Activated T-helper 1 cell treated with anti-CD3 and anti-CD28 coated beads, Interleukin-12 subunit alpha, Interleukin-12 subunit beta, Interleukin-2, Interleukin-4 antibody, amounts not matched to agents 30 ng/mL and 10 ng/mL and 1 ng/mL, durations not matched to agents 14 hours and 24 hours and 36 hours (primary cell): ENCODE measurements at regions of chr7 and their contacts with region 1.

Region 1: DNA sequence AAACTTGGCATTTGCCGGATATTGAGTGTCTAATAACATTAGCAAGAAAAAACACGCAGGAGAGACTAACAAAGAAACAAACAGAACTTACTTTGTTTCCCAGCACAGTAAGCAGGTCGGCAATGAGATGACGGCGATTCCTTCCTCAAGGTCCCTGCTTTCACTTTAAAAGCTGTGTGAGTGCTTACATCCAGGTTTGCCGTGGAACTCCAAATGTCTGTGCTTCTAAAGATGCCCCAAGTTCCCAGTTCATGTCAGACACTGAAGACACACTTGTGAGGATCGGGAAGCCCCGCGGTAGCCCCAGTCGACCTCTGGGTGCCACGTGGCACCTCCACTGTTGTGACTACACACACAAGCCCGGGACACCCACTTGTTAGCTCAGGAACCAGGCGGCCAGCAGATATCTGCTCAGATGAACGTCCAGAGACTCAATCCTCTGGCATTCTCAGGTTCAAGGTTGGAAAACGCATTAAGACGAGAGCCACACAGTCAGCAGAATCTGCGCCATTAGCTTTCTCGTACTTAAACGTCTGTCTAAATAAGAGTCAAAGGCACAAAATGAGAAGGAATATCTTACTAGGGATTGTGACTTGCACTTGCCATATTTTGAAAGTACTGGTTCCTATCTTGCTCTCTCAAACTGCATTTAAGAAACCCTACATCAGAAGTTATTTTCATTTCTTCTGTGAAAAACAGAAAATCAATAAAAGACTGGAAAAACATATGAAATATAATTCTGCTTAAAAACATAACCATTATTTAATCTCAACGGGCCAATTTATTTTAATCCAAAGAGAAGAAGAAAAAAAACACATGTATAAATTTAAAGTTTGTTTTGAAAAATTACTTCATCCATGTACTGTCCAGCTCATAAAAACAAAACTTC is 207.6 kb upstream of the KLF14 start:
- DNase-seq: no peak
- H3K4me3 Mint-ChIP-seq: peak overlapping the region; percentile 65
- H3K27ac Mint-ChIP-seq: peak overlapping the region; percentile 76
- H3K4me1 Mint-ChIP-seq: peaks cover 94% of the 10 kb centered on the region
- H3K27me3 Mint-ChIP-seq: no peaks in the 10 kb centered on the region

Region 2: GRCh38 chr7:130929896-130930659 is 11.5 kb before region 1 on chr7:
- intact Hi-C with region 1: loop called (anchors 1 kb)
- DNase-seq: no peak
- H3K4me3 Mint-ChIP-seq: peak overlapping the region; percentile 3
- H3K27ac Mint-ChIP-seq: peak overlapping the region; percentile 36
- H3K4me1 Mint-ChIP-seq: peaks cover 68% of the 10 kb centered on the region
- H3K27me3 Mint-ChIP-seq: no peaks in the 10 kb centered on the region

Region 3: GRCh38 chr7:131235489-131236317 is 294.1 kb after region 1 on chr7:
- intact Hi-C with region 1: no loop called
- DNase-seq: peak; percentile 77
- H3K4me3 Mint-ChIP-seq: peak overlapping the region; percentile 38
- H3K27ac Mint-ChIP-seq: peak overlapping the region; percentile 94
- H3K4me1 Mint-ChIP-seq: peaks cover 62% of the 10 kb centered on the region
- H3K27me3 Mint-ChIP-seq: no peaks in the 10 kb centered on the region